Naive thymus-derived CD4-positive, alpha-beta T cell (primary cell): ENCODE measurements at regions of chr10 and their contacts with region 1.

Region 1: DNA sequence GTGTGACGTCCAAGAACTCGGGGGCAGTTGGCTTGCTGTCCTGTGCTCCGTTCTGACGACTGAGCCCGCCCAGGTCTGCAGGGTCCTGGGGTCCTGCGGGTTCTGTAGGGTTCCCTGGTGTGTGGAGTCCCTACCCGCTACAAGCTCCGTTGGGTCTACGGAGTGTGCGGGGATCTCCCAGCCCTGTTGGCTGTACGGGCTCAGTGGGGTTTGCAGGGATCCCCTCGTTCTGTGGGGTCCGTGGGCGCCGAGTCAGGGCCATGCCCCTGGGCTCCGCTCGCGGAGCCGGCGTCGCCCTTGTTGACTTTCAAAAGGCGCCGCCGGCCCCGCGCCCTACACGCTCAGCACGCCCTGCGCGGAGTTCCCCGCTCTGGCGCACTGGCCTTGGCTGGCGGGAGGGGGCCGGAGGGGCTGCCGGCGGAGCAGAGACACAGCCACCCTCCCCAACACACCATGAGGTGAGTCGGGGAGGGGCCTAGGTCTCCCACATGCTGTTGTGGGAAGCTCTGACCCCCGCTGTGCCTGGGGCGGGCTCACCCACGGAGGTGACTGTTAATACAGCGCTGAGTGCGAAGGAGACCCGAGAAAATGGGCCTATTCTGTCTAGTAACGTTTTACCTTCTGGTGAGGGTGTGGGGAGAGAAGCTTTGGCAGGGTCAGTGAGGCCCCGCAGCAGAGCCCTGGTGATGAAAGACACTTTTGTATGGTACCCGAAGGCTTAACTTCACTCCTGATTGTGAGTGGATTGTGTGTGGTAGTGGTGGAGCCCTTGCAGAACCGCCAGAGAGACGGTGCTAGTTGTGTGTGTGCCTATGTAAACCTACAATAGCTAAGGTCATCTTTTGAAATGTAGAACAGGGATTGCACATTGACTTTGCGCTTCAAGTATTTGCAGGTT is 8.1 kb downstream of the TASOR2 start:
- DNase-seq: peak; percentile 36 to 77 (median 58)
- ATAC-seq: peak; percentile 93
- H3K4me3 ChIP-seq: peak overlapping the region; percentile 54
- H3K4me3 Mint-ChIP-seq: peak overlapping the region; percentile 77 to 88 (median 84)
- H3K27ac ChIP-seq: peak overlapping the region; percentile 49
- H3K27ac Mint-ChIP-seq: peak overlapping the region; percentile 50 to 93 (median 80)
- H3K4me1 ChIP-seq: peaks cover 23 to 32% of the 10 kb centered on the region in 2 donors
- H3K4me1 Mint-ChIP-seq: peaks cover 51 to 96% (median 79%) of the 10 kb centered on the region in 7 donors
- H3K27me3 ChIP-seq: no peaks in the 10 kb centered on the region
- H3K27me3 Mint-ChIP-seq: no peaks in the 10 kb centered on the region

Region 2: DNA sequence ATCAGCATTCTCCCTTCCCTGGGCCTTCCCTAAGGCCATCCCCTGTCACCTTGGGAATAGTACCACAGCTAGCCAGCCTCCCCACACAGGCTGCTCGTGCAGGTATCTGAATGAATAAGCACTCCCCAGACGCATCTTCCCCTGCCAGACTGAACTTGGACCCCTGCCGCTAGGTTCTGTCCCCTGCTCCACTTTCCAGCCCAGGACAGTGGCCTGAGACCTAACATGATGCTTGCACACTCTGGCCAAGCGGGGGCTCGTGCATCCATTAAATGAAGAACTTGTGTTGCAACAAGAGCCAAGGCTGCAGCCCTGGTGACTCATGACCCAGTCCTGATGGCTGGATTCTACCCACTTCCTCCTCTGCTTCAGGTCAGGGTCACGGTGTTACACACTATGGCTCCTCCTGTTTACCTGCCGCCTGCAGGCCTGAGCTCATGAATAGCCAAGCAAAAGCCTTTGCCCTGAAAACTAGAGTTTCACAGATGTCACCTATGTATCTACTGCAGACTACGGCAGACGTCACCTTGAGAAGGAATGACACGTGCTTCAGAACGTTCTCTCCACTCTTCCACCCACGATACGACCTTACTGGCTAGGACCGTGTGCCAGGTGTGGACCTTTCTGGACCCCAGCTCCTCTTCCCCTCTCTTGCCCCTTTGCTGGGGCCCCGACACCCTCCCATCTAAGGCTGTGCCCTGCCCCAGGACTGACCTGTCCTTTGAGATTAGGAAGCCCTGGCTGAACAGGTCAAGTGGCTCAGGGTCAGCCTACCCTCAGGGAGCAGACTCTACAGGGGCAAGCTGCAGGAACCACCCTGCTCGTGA is 32.8 kb before region 1 on chr10:
- CTCF ChIA-PET with region 1: no interaction called
- POLR2A ChIA-PET with region 1: no interaction called
- intact Hi-C with region 1: loop called in 1 of 2 experiments (anchors 5 kb)
- DNase-seq: no peak
- ATAC-seq: peak; percentile 79
- H3K4me3 ChIP-seq: no peak overlapping the region
- H3K4me3 Mint-ChIP-seq: peak overlapping the region in 1 of 10 donors; percentile 27
- H3K27ac ChIP-seq: no peak overlapping the region
- H3K27ac Mint-ChIP-seq: peak overlapping the region in 5 of 9 donors; percentile 12 to 57 (median 51)
- H3K4me1 ChIP-seq: peaks cover 0 to 20% of the 10 kb centered on the region in 2 donors
- H3K4me1 Mint-ChIP-seq: peaks cover 34 to 60% (median 44%) of the 10 kb centered on the region in 7 donors
- H3K27me3 ChIP-seq: no peaks in the 10 kb centered on the region
- H3K27me3 Mint-ChIP-seq: no peaks in the 10 kb centered on the region

Region 3: GRCh38 chr10:5710859-5711258 is 18.1 kb after region 1 on chr10:
- CTCF ChIA-PET with region 1: interaction called, 4 read pairs
- POLR2A ChIA-PET with region 1: interaction called, 4 read pairs
- intact Hi-C with region 1: loop called (anchors 1 to 2 kb)
- DNase-seq: peak in 1 of 9 donors; percentile 7
- ATAC-seq: no peak
- H3K4me3 ChIP-seq: peak overlapping the region; percentile 32
- H3K4me3 Mint-ChIP-seq: peak overlapping the region; percentile 16 to 84 (median 70)
- H3K27ac ChIP-seq: peak overlapping the region; percentile 20
- H3K27ac Mint-ChIP-seq: peak overlapping the region in 4 of 9 donors; percentile 68 to 89 (median 82)
- H3K4me1 ChIP-seq: peaks cover 11 to 20% of the 10 kb centered on the region in 2 donors
- H3K4me1 Mint-ChIP-seq: peaks cover 31 to 91% (median 79%) of the 10 kb centered on the region in 7 donors
- H3K27me3 ChIP-seq: no peaks in the 10 kb centered on the region
- H3K27me3 Mint-ChIP-seq: no peaks in the 10 kb centered on the region